ENCODE measurements at regions of chr7 and their contacts with region 1.

Region 1: DNA sequence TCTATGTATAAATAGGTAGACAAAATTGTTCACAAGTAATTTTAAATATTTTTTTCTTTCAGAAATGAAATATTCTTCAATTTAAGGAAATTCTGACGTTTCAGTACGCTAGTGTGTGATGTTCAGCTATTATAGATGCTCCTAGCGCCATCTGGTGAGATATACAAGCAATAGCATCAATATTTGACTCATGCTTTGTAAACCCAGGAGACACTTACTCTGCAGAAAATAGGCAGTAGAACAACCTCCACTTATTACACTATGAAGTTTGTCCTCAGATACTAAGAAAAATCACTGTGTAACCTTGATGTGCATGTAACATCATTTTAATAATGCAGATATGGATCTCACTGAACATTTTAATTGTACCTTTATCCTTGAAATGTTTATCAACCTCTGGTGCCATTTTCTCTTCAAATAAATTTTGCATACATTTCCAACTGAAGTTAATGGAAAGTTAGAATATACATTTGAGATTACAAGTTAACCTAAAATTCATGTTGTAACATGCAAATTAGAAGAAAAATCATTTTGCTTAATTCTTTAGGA is 151.5 kb upstream of the FAM3C start:
- DNase-seq: no peak
- ATAC-seq: peak; percentile 61
- H3K4me3 Mint-ChIP-seq: no peak overlapping the region
- H3K27ac Mint-ChIP-seq: no peak overlapping the region
- H3K4me1 Mint-ChIP-seq: peaks cover 29% of the 10 kb centered on the region
- H3K27me3 Mint-ChIP-seq: peaks cover 4% of the 10 kb centered on the region

Region 2: GRCh38 chr7:120805636-120806388 is 741.8 kb before region 1 on chr7:
- CTCF ChIA-PET with region 1: no interaction called
- POLR2A ChIA-PET with region 1: no interaction called
- intact Hi-C with region 1: loop called in 1 of 2 experiments (anchors 5 kb)
- DNase-seq: peak; percentile 68
- ATAC-seq: peak; percentile 39
- H3K4me3 Mint-ChIP-seq: no peak overlapping the region
- H3K27ac Mint-ChIP-seq: no peak overlapping the region
- H3K4me1 Mint-ChIP-seq: no peaks in the 10 kb centered on the region
- H3K27me3 Mint-ChIP-seq: peaks cover 2% of the 10 kb centered on the region

Region 3: GRCh38 chr7:120987683-120988590 is 559.7 kb before region 1 on chr7:
- CTCF ChIA-PET with region 1: no interaction called
- POLR2A ChIA-PET with region 1: no interaction called
- intact Hi-C with region 1: loop called (anchors 5 to 10 kb)
- DNase-seq: peak; percentile 91
- ATAC-seq: peak; percentile 99
- H3K4me3 Mint-ChIP-seq: peak overlapping the region; percentile 53
- H3K27ac Mint-ChIP-seq: no peak overlapping the region
- H3K4me1 Mint-ChIP-seq: peaks cover 17% of the 10 kb centered on the region
- H3K27me3 Mint-ChIP-seq: peaks cover 38% of the 10 kb centered on the region

Region 4: GRCh38 chr7:121278120-121279021 is 269.2 kb before region 1 on chr7:
- CTCF ChIA-PET with region 1: no interaction called
- POLR2A ChIA-PET with region 1: no interaction called
- intact Hi-C with region 1: loop called (anchors 1 to 2 kb)
- DNase-seq: no peak
- ATAC-seq: peak; percentile 92
- H3K4me3 Mint-ChIP-seq: no peak overlapping the region
- H3K27ac Mint-ChIP-seq: no peak overlapping the region
- H3K4me1 Mint-ChIP-seq: peaks cover 20% of the 10 kb centered on the region
- H3K27me3 Mint-ChIP-seq: peaks cover 33% of the 10 kb centered on the region

Region 5: DNA sequence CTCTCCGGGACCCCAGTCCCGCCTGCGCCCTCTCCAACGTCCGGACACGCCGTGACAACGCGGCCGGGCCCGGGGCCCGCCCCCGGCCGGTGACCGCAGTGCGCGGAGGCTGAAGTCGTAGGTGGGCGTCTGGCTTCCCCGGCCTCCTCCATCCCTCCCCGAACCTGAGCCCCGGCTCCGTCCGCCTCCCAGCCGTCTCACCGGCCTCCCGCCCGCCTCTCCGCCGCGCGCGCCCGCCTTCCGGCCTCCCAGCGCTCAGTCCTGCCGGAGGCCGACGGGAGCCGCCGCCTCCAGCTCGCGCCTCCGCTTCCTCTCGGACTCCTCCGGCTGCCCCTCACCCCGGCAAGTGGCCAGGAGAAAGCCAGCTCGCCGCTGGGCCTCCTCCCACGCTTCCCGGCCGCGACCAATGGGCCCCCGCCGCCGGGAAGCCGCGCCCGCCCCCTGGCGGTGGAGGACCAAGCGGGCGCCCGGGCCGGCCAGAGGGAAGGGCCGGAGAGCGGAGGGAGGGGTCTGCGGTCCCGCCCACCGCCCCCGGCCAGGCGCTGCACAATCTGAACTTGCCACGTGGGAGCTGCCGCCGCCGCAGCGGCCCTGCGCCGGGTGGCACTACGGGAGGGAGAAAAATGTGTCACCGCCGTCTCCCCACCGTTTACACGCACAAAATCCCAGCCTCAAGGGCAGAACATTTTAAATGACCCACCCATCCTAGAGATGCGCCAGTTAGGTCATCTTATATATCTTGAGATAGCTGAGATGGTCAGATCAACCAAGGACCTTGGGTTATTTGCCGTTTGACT is 151.5 kb before region 1 on chr7 and contains the start of gene FAM3C:
- CTCF ChIA-PET with region 1: interaction called, 6 read pairs
- POLR2A ChIA-PET with region 1: no interaction called
- intact Hi-C with region 1: loop called (anchors 1 to 10 kb)
- DNase-seq: peak; percentile 92
- ATAC-seq: peak; percentile 89
- H3K4me3 Mint-ChIP-seq: peak within 1 kb of the TSS; percentile 88
- H3K27ac Mint-ChIP-seq: peak within 1 kb of the TSS; percentile 88
- H3K4me1 Mint-ChIP-seq: peaks cover 33% of the 10 kb centered on the region
- H3K27me3 Mint-ChIP-seq: no peaks in the 10 kb centered on the region
- total RNA-seq, gene FAM3C: 13.3 to 14.9 TPM

Region 6: DNA sequence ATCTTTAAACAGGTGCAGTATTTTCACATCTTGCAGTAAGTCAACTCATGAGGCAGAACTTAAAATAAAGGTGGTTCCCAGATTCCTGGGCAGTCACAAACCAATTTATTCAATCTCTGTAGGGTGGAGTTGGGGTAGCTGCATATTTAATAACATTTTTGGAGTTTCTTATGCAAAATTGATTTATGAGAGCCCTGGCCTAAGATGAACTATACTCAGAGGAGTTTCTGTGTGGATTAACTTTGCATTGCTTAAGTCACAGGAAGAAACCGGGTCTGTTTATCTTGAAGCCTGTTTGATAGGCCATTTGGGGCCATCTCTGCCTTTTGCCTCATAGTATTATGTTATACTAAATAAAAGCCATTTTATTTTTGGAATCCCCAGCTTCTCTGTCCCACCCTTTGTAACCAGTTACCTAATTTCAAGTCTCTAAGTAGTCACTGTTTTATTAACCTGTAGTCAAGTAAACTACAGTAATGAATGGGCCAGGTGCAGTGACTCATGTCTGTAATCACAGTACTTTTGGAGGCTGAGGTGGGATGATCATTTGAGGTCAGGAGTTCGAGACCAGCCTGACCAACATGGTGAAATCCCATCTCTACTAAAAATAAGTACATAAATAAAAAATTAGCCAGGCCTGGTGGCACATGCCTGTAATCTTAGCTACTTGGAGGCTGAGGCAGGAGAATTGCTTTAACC is 47.1 kb before region 1 on chr7:
- CTCF ChIA-PET with region 1: interaction called, 4 read pairs
- POLR2A ChIA-PET with region 1: no interaction called
- intact Hi-C with region 1: loop called (anchors 2 kb)
- DNase-seq: peak; percentile 13
- ATAC-seq: peak; percentile 11
- H3K4me3 Mint-ChIP-seq: no peak overlapping the region
- H3K27ac Mint-ChIP-seq: no peak overlapping the region
- H3K4me1 Mint-ChIP-seq: peaks cover 16% of the 10 kb centered on the region
- H3K27me3 Mint-ChIP-seq: peaks cover 7% of the 10 kb centered on the region

Region 7: GRCh38 chr7:121994625-121995410 is 447.2 kb after region 1 on chr7:
- CTCF ChIA-PET with region 1: interaction called, 5 read pairs
- POLR2A ChIA-PET with region 1: no interaction called
- intact Hi-C with region 1: loop called in 1 of 2 experiments (anchors 5 kb)
- DNase-seq: peak; percentile 65
- ATAC-seq: peak; percentile 70
- H3K4me3 Mint-ChIP-seq: no peak overlapping the region
- H3K27ac Mint-ChIP-seq: no peak overlapping the region
- H3K4me1 Mint-ChIP-seq: no peaks in the 10 kb centered on the region
- H3K27me3 Mint-ChIP-seq: no peaks in the 10 kb centered on the region

Region 8: GRCh38 chr7:123220396-123220795 is 1672.8 kb after region 1 on chr7:
- CTCF ChIA-PET with region 1: no interaction called
- POLR2A ChIA-PET with region 1: no interaction called
- intact Hi-C with region 1: no loop called
- DNase-seq: no peak
- ATAC-seq: no peak
- H3K4me3 Mint-ChIP-seq: no peak overlapping the region
- H3K27ac Mint-ChIP-seq: no peak overlapping the region
- H3K4me1 Mint-ChIP-seq: no peaks in the 10 kb centered on the region
- H3K27me3 Mint-ChIP-seq: no peaks in the 10 kb centered on the region